ENCODE measurements at regions of chr9 and their contacts with region 1.

Region 1: GRCh38 chr9:132240753-132241493 is 79.1 kb downstream of the NTNG2 start:
- DNase-seq: peak; percentile 98
- ATAC-seq: peak; percentile 87
- H3K4me3 ChIP-seq: peak overlapping the region in 4 of 5 experiments; percentile 67 to 82 (median 76)
- H3K4me3 Mint-ChIP-seq: peak overlapping the region; percentile 97
- H3K27ac ChIP-seq: peak overlapping the region in 1 of 2 donors; percentile 18
- H3K27ac Mint-ChIP-seq: peak overlapping the region; percentile 97
- H3K4me1 ChIP-seq: peaks cover 7 to 24% of the 10 kb centered on the region in 2 donors
- H3K4me1 Mint-ChIP-seq: peaks cover 17% of the 10 kb centered on the region
- H3K27me3 ChIP-seq: peaks cover 0 to 11% (median 2%) of the 10 kb centered on the region in 4 experiments
- H3K27me3 Mint-ChIP-seq: peaks cover 3% of the 10 kb centered on the region
- CTCF ChIP-seq: no peak

Region 2: GRCh38 chr9:131755541-131756198 is 485.3 kb before region 1 on chr9:
- CTCF ChIA-PET with region 1: interaction called, 43 read pairs
- POLR2A ChIA-PET with region 1: no interaction called
- intact Hi-C with region 1: no loop called
- DNase-seq: peak; percentile 90
- ATAC-seq: peak; percentile 100
- H3K4me3 ChIP-seq: no peak overlapping the region
- H3K4me3 Mint-ChIP-seq: no peak overlapping the region
- H3K27ac ChIP-seq: no peak overlapping the region
- H3K27ac Mint-ChIP-seq: peak overlapping the region; percentile 70
- H3K4me1 ChIP-seq: peaks cover 6 to 8% of the 10 kb centered on the region in 2 donors
- H3K4me1 Mint-ChIP-seq: peaks cover 8% of the 10 kb centered on the region
- H3K27me3 ChIP-seq: peaks cover 0 to 7% (median 2%) of the 10 kb centered on the region in 4 experiments
- H3K27me3 Mint-ChIP-seq: peaks cover 7% of the 10 kb centered on the region
- CTCF ChIP-seq: peak; percentile 83

Region 3: GRCh38 chr9:132006677-132007370 is 234.1 kb before region 1 on chr9:
- CTCF ChIA-PET with region 1: no interaction called
- POLR2A ChIA-PET with region 1: no interaction called
- intact Hi-C with region 1: no loop called
- DNase-seq: no peak
- ATAC-seq: no peak
- H3K4me3 ChIP-seq: no peak overlapping the region
- H3K4me3 Mint-ChIP-seq: no peak overlapping the region
- H3K27ac ChIP-seq: no peak overlapping the region
- H3K27ac Mint-ChIP-seq: no peak overlapping the region
- H3K4me1 ChIP-seq: peaks cover 9 to 10% of the 10 kb centered on the region in 2 donors
- H3K4me1 Mint-ChIP-seq: peaks cover 24% of the 10 kb centered on the region
- H3K27me3 ChIP-seq: no peaks in the 10 kb centered on the region
- H3K27me3 Mint-ChIP-seq: no peaks in the 10 kb centered on the region
- CTCF ChIP-seq: no peak

Region 4: DNA sequence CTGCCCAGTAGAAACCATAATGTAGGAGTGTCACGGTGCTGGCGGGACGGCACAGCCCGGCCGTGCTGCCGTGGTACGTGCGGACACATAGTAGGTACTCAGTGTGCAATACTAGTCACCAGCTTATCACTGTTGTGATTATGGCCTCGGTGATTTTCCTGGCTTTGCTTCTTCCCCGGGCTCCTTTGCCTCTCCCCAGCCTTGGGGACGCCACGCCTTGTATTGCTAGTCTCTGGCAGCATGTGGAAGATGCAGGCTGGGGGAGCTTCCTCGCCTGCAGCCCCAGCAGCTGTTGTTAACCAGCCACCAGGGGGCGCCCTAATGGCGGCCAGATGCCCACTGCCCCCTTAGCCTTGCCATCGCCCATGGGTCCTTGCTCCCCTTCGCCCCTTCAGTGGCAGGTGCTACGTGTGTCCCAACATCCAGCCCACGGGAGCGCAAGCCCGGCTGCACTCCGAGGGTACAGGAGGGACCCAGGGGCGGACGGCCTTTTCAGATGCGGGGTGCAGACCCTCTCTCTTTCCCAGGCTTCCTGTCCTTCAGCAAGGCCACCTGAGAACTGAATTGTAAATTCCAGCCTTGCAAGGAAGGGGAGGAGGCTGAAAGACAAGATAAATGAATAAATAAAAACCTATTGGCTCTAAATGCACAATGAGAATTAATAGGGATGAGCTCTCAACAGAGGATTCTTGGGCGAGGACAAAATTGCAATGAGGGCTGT is 71.1 kb before region 1 on chr9:
- CTCF ChIA-PET with region 1: interaction called, 144 read pairs
- POLR2A ChIA-PET with region 1: no interaction called
- intact Hi-C with region 1: no loop called
- DNase-seq: peak; percentile 75
- ATAC-seq: peak; percentile 49
- H3K4me3 ChIP-seq: no peak overlapping the region
- H3K4me3 Mint-ChIP-seq: no peak overlapping the region
- H3K27ac ChIP-seq: no peak overlapping the region
- H3K27ac Mint-ChIP-seq: no peak overlapping the region
- H3K4me1 ChIP-seq: peaks cover under 1 to 2% of the 10 kb centered on the region in 2 donors
- H3K4me1 Mint-ChIP-seq: peaks cover under 1% of the 10 kb centered on the region
- H3K27me3 ChIP-seq: peaks cover 0 to 43% (median 17%) of the 10 kb centered on the region in 4 experiments
- H3K27me3 Mint-ChIP-seq: peaks cover 63% of the 10 kb centered on the region
- CTCF ChIP-seq: peak; percentile 95

Region 5: GRCh38 chr9:132260846-132261245 is 19.9 kb after region 1 on chr9:
- CTCF ChIA-PET with region 1: interaction called, 12 read pairs
- POLR2A ChIA-PET with region 1: interaction called, 4 read pairs
- intact Hi-C with region 1: loop called (anchors 2 kb)
- DNase-seq: no peak
- ATAC-seq: no peak
- H3K4me3 ChIP-seq: no peak overlapping the region
- H3K4me3 Mint-ChIP-seq: no peak overlapping the region
- H3K27ac ChIP-seq: no peak overlapping the region
- H3K27ac Mint-ChIP-seq: no peak overlapping the region
- H3K4me1 ChIP-seq: peaks cover 4 to 10% of the 10 kb centered on the region in 2 donors
- H3K4me1 Mint-ChIP-seq: peaks cover 9% of the 10 kb centered on the region
- H3K27me3 ChIP-seq: no peaks in the 10 kb centered on the region
- H3K27me3 Mint-ChIP-seq: no peaks in the 10 kb centered on the region
- CTCF ChIP-seq: no peak

Region 6: GRCh38 chr9:132406554-132407122 is 165.7 kb after region 1 on chr9 and contains the start of gene TTF1:
- CTCF ChIA-PET with region 1: interaction called, 3 read pairs
- POLR2A ChIA-PET with region 1: no interaction called
- intact Hi-C with region 1: loop called (anchors 1 kb)
- DNase-seq: peak; percentile 97
- ATAC-seq: peak; percentile 79
- H3K4me3 ChIP-seq: peak within 1 kb of the TSS; percentile 72 to 84 (median 77)
- H3K4me3 Mint-ChIP-seq: peak within 1 kb of the TSS; percentile 96
- H3K27ac ChIP-seq: peak within 1 kb of the TSS; percentile 52 to 84
- H3K27ac Mint-ChIP-seq: peak within 1 kb of the TSS; percentile 95
- H3K4me1 ChIP-seq: peaks cover 43 to 50% of the 10 kb centered on the region in 2 donors
- H3K4me1 Mint-ChIP-seq: peaks cover 49% of the 10 kb centered on the region
- H3K27me3 ChIP-seq: peaks cover 0 to 10% (median 2%) of the 10 kb centered on the region in 4 experiments
- H3K27me3 Mint-ChIP-seq: no peaks in the 10 kb centered on the region
- CTCF ChIP-seq: no peak
- total RNA-seq, gene TTF1: 26.3 and 28.5 TPM in 2 replicates

Measured in B cell (primary cell).